Breast epithelium (tissue), 4 donors: ENCODE measurements at regions of chr2 and their contacts with region 1.

Region 1: DNA sequence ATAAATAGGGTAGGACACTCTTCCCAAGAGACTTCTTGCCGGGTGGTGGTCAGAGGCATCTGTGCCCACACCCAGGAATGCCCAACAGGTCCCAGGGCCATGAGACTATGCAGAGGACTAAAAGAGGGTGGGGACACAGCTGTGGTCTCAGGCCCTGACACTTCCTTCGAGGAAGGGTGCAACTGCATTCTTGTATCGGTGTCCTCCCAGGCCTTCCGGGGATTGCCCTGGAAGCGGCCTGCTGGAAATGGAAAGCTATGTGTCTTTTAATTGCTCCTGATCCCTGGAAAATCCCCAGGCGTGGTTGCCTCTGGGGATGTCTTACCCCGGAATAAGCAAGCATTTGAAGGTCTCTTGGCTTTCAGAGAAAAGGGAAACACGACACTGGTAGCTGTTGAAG is 176.8 kb downstream of the SOX11 start:
- DNase-seq: no peak
- H3K4me3 ChIP-seq: no peak overlapping the region
- H3K27ac ChIP-seq: no peak overlapping the region
- H3K4me1 ChIP-seq: no peaks in the 10 kb centered on the region
- H3K27me3 ChIP-seq: no peaks in the 10 kb centered on the region
- CTCF ChIP-seq: no peak
- POLR2A ChIP-seq: no peak

Region 2: GRCh38 chr2:5057891-5058351 is 811.0 kb before region 1 on chr2:
- intact Hi-C with region 1: no loop called
- DNase-seq: no peak
- H3K4me3 ChIP-seq: no peak overlapping the region
- H3K27ac ChIP-seq: no peak overlapping the region
- H3K4me1 ChIP-seq: no peaks in the 10 kb centered on the region
- H3K27me3 ChIP-seq: no peaks in the 10 kb centered on the region
- CTCF ChIP-seq: no peak
- POLR2A ChIP-seq: no peak

Region 3: GRCh38 chr2:5915881-5916310 is 47.0 kb after region 1 on chr2:
- intact Hi-C with region 1: loop called (anchors 1 kb)
- DNase-seq: peak in 1 of 2 donors; percentile 57
- H3K4me3 ChIP-seq: no peak overlapping the region
- H3K27ac ChIP-seq: no peak overlapping the region
- H3K4me1 ChIP-seq: no peaks in the 10 kb centered on the region
- H3K27me3 ChIP-seq: no peaks in the 10 kb centered on the region
- CTCF ChIP-seq: peak in 2 of 3 donors; percentile 16 to 24
- POLR2A ChIP-seq: no peak